Cardiac septum (tissue), 1 donor: ENCODE measurements at regions of chr7 and their contacts with region 1.

Region 1: GRCh38 chr7:108569381-108570145 is at the starts of genes DNAJB9 and THAP5:
- DNase-seq: peak; percentile 100
- total RNA-seq, gene DNAJB9: 38.0 TPM
- total RNA-seq, gene THAP5: 25.4 TPM

Region 2: DNA sequence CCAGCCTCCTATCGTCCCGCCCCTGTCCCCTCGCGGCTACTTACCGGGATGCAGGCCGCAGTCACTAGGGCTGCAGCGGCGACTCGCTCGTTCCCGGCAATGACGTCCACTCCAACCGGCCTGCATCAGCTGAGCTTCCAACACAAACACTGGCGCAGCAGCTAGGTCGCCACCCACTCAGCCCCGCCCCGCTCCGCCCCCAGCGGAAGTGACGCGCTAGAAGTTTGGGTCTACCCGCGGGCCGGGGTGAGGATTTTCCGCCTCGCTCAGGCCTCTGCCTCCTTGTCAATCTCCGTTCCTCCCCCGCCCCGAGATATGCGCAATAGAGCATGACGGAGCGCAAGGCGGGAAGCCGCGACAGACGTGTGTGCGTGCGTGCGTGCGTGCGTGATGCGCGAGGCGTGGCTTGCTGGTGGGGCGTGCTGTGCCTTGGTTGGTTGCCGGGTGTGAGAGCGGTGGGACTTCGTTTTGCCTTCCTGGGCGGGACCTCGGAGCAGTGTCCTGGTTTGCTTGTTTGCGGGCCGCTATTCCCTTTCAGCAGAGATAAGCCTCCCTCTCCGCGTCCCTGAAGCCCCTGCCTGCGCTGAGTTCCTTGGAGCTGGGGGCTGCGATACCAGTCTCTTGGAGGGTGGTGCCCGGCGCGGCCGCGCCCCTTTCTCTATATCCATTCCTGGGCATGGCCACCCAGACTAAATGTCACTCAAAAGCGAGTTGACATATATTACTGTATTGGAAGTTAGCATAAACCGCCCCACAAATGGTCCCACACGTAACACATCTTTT is 43.4 kb before region 1 on chr7 and contains the start of gene PNPLA8:
- intact Hi-C with region 1: loop called (anchors 1 kb)
- DNase-seq: peak; percentile 100
- total RNA-seq, gene PNPLA8: 31.9 TPM